ENCODE measurements at regions of chr1 and their contacts with region 1.

Region 1: GRCh38 chr1:67339623-67340343 is 32.1 kb downstream of the IL12RB2 start:
- DNase-seq: no peak
- CTCF ChIP-seq: no peak

Region 2: DNA sequence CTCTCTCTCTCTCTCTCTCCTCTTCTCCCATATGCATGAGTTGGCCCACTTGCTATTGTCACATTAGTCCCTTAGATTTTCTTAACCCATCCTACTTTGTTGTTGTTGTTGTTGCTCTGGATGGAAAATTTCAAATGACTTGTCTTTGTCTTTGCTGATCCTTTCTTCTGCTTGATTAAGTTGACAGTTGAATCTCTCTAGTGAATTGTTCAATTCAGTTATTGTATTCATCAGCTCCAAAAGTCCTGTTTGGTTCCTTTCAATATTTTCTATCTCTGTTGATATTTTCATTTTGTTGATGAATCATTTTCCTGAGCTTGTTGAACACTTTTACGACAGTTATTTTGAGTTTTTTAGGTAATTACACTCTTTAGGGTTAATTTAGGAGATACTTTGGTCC is 267.0 kb before region 1 on chr1:
- CTCF ChIA-PET with region 1: no interaction called
- POLR2A ChIA-PET with region 1: no interaction called
- DNase-seq: no peak
- CTCF ChIP-seq: no peak

Region 3: GRCh38 chr1:67298762-67299161 is 41.0 kb before region 1 on chr1:
- CTCF ChIA-PET with region 1: no interaction called
- POLR2A ChIA-PET with region 1: interaction called, 11 read pairs
- DNase-seq: no peak
- CTCF ChIP-seq: no peak

Region 4: DNA sequence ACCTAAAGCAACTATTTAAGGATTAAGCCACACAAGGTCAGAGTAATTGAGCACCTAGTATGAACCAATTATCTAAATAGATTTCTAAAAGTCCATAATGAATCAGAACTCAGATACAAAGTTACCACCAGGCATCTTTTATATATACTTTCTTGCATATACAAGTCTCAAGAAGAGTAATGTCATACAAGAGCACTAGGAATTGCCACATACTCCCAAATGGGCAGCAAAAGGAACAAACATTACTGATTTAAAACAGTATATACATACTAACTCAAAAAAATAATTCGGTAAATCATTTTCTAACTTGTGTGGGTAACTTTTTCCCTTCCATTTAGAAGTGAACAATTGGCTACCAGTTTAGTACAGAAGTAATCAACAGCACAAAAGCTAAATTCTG is 68.4 kb after region 1 on chr1:
- CTCF ChIA-PET with region 1: no interaction called
- POLR2A ChIA-PET with region 1: no interaction called
- DNase-seq: no peak
- CTCF ChIP-seq: no peak

Measured in GM10248 (cell line).